MCF 10A (cell line): ENCODE measurements at regions of chr6 and their contacts with region 1.

Region 1: GRCh38 chr6:27893059-27893835 is 18.9 kb downstream of the OR2B2 start:
- DNase-seq: peak; percentile 98
- H3K4me3 Mint-ChIP-seq: no peak overlapping the region
- H3K27ac Mint-ChIP-seq: no peak overlapping the region
- H3K4me1 Mint-ChIP-seq: peaks cover 12% of the 10 kb centered on the region
- H3K27me3 Mint-ChIP-seq: no peaks in the 10 kb centered on the region
- CTCF ChIP-seq: no peak

Region 2: GRCh38 chr6:26031595-26032339 is 1861.5 kb before region 1 on chr6:
- CTCF ChIA-PET with region 1: no interaction called
- POLR2A ChIA-PET with region 1: interaction called, 23 read pairs
- intact Hi-C with region 1: loop called (anchors 5 kb)
- DNase-seq: peak; percentile 99
- H3K4me3 Mint-ChIP-seq: peak overlapping the region; percentile 81
- H3K27ac Mint-ChIP-seq: peak overlapping the region; percentile 97
- H3K4me1 Mint-ChIP-seq: peaks cover 25% of the 10 kb centered on the region
- H3K27me3 Mint-ChIP-seq: no peaks in the 10 kb centered on the region
- CTCF ChIP-seq: peak; percentile 12

Region 3: GRCh38 chr6:27146706-27147505 is 746.3 kb before region 1 on chr6:
- CTCF ChIA-PET with region 1: interaction called, 5 read pairs
- POLR2A ChIA-PET with region 1: interaction called, 95 read pairs
- intact Hi-C with region 1: loop called (anchors 5 kb)
- DNase-seq: peak; percentile 99
- H3K4me3 Mint-ChIP-seq: no peak overlapping the region
- H3K27ac Mint-ChIP-seq: no peak overlapping the region
- H3K4me1 Mint-ChIP-seq: no peaks in the 10 kb centered on the region
- H3K27me3 Mint-ChIP-seq: no peaks in the 10 kb centered on the region
- CTCF ChIP-seq: no peak

Region 4: DNA sequence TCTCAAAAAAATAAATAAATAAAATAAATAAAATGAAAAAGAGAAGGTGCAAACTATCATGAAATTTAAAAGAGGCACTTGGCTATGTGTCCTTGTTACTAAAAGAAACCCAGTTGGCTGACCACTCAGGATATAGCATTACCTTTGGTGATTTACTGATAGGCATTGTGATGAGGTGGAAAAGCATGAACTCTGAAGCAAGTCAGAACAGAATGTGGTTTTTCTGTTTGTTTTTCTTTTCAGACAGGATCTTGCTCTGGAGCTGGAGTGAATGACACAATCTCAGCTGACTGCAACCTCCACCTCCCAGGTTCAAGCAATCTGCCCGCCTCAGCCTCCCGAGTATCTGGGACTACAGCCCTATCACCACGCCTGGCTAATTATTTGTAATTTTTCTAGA is 452.2 kb before region 1 on chr6:
- CTCF ChIA-PET with region 1: no interaction called
- POLR2A ChIA-PET with region 1: no interaction called
- intact Hi-C with region 1: no loop called
- DNase-seq: peak; percentile 4
- H3K4me3 Mint-ChIP-seq: no peak overlapping the region
- H3K27ac Mint-ChIP-seq: no peak overlapping the region
- H3K4me1 Mint-ChIP-seq: no peaks in the 10 kb centered on the region
- H3K27me3 Mint-ChIP-seq: no peaks in the 10 kb centered on the region
- CTCF ChIP-seq: no peak

Region 5: DNA sequence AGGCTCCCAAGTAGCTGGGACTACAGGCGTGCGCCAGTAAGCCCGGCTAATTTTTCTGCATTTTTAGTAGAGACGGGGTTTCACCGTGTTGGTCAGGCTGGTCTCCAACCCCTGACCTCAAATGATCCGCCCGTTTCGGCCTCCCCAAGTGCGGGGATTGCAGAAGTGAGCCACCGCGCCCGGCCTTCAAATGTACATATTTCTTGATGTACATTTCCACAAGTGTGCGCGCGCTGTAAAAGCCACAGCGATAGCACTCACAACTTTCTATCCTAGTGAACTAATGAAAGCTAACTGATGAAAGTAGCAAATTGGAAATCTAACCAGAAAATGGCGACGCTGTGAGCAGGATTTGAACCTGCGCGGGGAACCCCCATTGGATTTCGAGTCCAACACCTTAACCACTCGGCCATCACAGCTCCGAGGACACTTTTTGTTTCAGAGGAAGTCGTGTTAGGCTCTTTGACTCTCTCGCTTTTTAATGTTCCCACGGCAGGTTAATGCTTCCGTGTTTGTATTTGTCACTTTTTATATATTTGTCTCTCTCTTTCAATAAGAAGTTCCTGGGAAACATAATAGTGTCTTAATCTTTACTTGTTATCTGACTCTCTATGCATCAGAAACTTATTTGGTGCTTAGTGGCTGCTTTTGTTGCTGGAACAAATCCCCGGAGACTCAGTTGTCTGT is 221.0 kb before region 1 on chr6:
- CTCF ChIA-PET with region 1: no interaction called
- POLR2A ChIA-PET with region 1: interaction called, 3 read pairs
- intact Hi-C with region 1: loop called (anchors 10 kb)
- DNase-seq: peak; percentile 84
- H3K4me3 Mint-ChIP-seq: peak overlapping the region; percentile 76
- H3K27ac Mint-ChIP-seq: peak overlapping the region; percentile 77
- H3K4me1 Mint-ChIP-seq: peaks cover 12% of the 10 kb centered on the region
- H3K27me3 Mint-ChIP-seq: no peaks in the 10 kb centered on the region
- CTCF ChIP-seq: no peak

Region 6: GRCh38 chr6:27795697-27796494 is 97.4 kb before region 1 on chr6:
- CTCF ChIA-PET with region 1: interaction called, 32 read pairs
- POLR2A ChIA-PET with region 1: interaction called, 21 read pairs
- intact Hi-C with region 1: no loop called
- DNase-seq: peak; percentile 91
- H3K4me3 Mint-ChIP-seq: no peak overlapping the region
- H3K27ac Mint-ChIP-seq: no peak overlapping the region
- H3K4me1 Mint-ChIP-seq: peaks cover 5% of the 10 kb centered on the region
- H3K27me3 Mint-ChIP-seq: no peaks in the 10 kb centered on the region
- CTCF ChIP-seq: peak; percentile 79

Region 7: DNA sequence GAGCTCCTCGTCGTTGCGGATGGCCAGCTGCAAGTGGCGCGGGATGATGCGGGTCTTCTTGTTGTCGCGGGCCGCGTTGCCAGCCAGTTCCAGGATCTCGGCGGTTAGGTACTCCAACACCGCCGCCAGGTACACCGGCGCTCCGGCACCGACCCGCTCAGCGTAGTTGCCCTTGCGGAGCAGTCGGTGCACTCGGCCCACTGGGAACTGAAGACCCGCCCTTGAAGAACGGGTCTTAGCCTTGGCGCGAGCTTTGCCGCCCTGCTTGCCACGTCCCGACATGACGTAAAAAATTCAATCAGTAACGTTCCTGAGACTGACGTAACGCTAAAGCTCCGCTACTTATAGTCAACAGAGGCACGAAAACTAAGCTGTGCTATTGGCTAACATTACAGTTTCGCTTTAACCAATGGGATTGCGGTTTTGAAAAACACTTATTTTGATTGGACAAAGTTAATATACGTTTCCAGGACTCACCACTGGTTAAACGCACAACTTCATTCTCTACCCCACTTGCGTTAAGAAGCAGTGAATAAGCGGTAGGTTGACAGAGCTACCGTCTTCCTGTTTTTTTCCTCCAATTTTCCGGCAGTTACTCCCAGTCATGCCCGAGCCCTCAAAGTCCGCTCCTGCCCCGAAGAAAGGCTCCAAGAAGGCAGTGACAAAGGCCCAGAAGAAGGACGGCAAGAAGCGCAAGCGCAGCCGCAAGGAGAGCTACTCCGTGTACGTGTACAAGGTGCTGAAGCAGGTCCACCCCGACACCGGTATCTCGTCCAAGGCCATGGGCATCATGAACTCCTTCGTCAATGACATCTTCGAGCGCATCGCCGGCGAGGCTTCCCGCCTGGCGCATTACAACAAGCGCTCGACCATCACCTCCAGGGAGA is 54.9 kb before region 1 on chr6:
- CTCF ChIA-PET with region 1: interaction called, 18 read pairs
- POLR2A ChIA-PET with region 1: interaction called, 592 read pairs
- intact Hi-C with region 1: loop called (anchors 1 kb)
- DNase-seq: peak; percentile 98
- H3K4me3 Mint-ChIP-seq: no peak overlapping the region
- H3K27ac Mint-ChIP-seq: no peak overlapping the region
- H3K4me1 Mint-ChIP-seq: peaks cover 32% of the 10 kb centered on the region
- H3K27me3 Mint-ChIP-seq: no peaks in the 10 kb centered on the region
- CTCF ChIP-seq: no peak

Region 8: GRCh38 chr6:27871924-27872638 is 21.2 kb before region 1 on chr6:
- CTCF ChIA-PET with region 1: interaction called, 18 read pairs
- POLR2A ChIA-PET with region 1: interaction called, 644 read pairs
- intact Hi-C with region 1: loop called (anchors 2 kb)
- DNase-seq: peak; percentile 89
- H3K4me3 Mint-ChIP-seq: peak overlapping the region; percentile 79
- H3K27ac Mint-ChIP-seq: peak overlapping the region; percentile 93
- H3K4me1 Mint-ChIP-seq: peaks cover 2% of the 10 kb centered on the region
- H3K27me3 Mint-ChIP-seq: no peaks in the 10 kb centered on the region
- CTCF ChIP-seq: no peak